Activated T-helper 2 cell treated with anti-CD3 and anti-CD28 coated beads, Interferon-gamma antibody, Interleukin-2, Interleukin-4, amounts not matched to agents 10 μg/mL and 5 μg/mL and 100 μg/mL, durations not matched to agents 14 hours and 24 hours and 36 hours (primary cell): ENCODE measurements at regions of chrX and their contacts with region 1.

Region 1: GRCh38 chrX:155819966-155820491 is 61.1 kb upstream of the VAMP7 start:
- DNase-seq: no peak
- H3K4me3 Mint-ChIP-seq: no peak overlapping the region
- H3K27ac Mint-ChIP-seq: no peak overlapping the region
- H3K4me1 Mint-ChIP-seq: peaks cover 2% of the 10 kb centered on the region
- H3K27me3 Mint-ChIP-seq: peaks cover 5% of the 10 kb centered on the region

Region 2: GRCh38 chrX:155086202-155086840 is 733.7 kb before region 1 on chrX:
- intact Hi-C with region 1: loop called (anchors 10 kb)
- DNase-seq: no peak
- H3K4me3 Mint-ChIP-seq: no peak overlapping the region
- H3K27ac Mint-ChIP-seq: no peak overlapping the region
- H3K4me1 Mint-ChIP-seq: no peaks in the 10 kb centered on the region
- H3K27me3 Mint-ChIP-seq: no peaks in the 10 kb centered on the region